Psoas muscle (tissue), 8 donors: ENCODE measurements at regions of chr2 and their contacts with region 1.

Region 1: GRCh38 chr2:181231886-181232621 is 225.1 kb upstream of the ITGA4 start:
- DNase-seq: no peak
- ATAC-seq: no peak
- H3K4me3 ChIP-seq: no peak overlapping the region
- H3K27ac ChIP-seq: no peak overlapping the region
- H3K4me1 ChIP-seq: no peaks in the 10 kb centered on the region
- H3K27me3 ChIP-seq: no peaks in the 10 kb centered on the region
- CTCF ChIP-seq: no peak

Region 2: GRCh38 chr2:181203412-181203811 is 28.6 kb before region 1 on chr2:
- intact Hi-C with region 1: loop called in 1 of 2 experiments (anchors 1 kb)
- DNase-seq: no peak
- ATAC-seq: no peak
- H3K4me3 ChIP-seq: no peak overlapping the region
- H3K27ac ChIP-seq: no peak overlapping the region
- H3K4me1 ChIP-seq: no peaks in the 10 kb centered on the region
- H3K27me3 ChIP-seq: no peaks in the 10 kb centered on the region
- CTCF ChIP-seq: no peak